PC-3 (cell line): ENCODE measurements at regions of chr12 and their contacts with region 1.

Region 1: GRCh38 chr12:26629864-26630263 is 203.1 kb downstream of the ITPR2 start:
- DNase-seq: peak; percentile 41
- ATAC-seq: peak; percentile 28; the same call in 1 of the 2 replicates
- H3K4me3 ChIP-seq: 0 out of 2 replicates have a peak overlapping the region, but pooled peaks have one; percentile 8
- H3K27ac ChIP-seq: peak overlapping the region; percentile 46
- H3K4me1 ChIP-seq: peaks cover 55% of the 10 kb centered on the region
- H3K27me3 ChIP-seq: no peaks in the 10 kb centered on the region
- CTCF ChIP-seq: peak; percentile 79

Region 2: DNA sequence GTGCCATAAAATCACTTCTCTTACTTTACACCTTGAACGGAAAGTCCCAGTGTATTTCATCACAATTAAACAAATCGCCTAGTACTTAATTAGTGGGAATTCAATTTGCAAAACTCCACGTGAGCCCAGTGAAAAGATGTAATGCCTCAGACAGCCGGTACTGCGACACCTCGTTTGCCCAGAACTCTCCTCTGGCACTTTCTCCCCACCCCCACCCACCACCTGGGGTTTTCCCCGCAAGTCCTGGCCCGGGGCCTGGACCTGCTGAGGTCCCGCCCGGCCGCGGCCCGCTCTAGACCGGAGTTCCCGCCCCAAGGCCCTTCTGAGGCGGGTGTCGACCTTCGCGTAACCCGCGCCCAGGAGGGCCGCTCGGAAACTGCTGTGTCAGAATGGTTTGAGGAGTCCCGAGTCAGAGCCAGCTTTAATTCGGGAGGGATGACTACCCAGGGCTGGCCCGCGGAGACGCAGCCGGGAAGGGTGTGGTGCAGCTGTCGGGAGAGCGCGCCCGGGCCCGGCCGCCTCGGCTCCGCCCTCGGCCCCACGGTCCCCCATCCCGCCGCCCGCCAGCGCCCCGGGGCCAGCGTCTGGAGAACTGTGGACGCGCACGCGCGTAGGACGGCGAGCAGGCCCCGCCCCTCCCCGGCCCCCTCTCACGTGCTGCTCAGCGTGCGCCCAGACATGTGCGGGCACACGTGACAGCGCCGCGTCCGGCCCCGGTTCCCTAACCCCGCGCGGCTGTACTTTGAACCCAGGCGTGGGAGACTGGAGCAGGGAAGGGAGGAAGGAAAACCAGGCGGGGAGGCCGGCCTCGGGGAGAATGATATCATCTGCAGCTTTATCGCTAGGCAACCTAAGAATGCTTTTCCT is 515.8 kb before region 1 on chr12:
- CTCF ChIA-PET with region 1: no interaction called
- POLR2A ChIA-PET with region 1: no interaction called
- intact Hi-C with region 1: loop called (anchors 2 kb)
- DNase-seq: peak; percentile 94
- ATAC-seq: peak; percentile 83
- H3K4me3 ChIP-seq: peak overlapping the region; percentile 71
- H3K27ac ChIP-seq: peak overlapping the region; percentile 89
- H3K4me1 ChIP-seq: peaks cover 48% of the 10 kb centered on the region
- H3K27me3 ChIP-seq: no peaks in the 10 kb centered on the region
- CTCF ChIP-seq: no peak; the same call in 1 of the 2 replicates

Region 3: GRCh38 chr12:26493656-26494055 is 136.2 kb before region 1 on chr12:
- CTCF ChIA-PET with region 1: no interaction called
- POLR2A ChIA-PET with region 1: no interaction called
- intact Hi-C with region 1: no loop called
- DNase-seq: peak; percentile 97
- ATAC-seq: peak; percentile 85
- H3K4me3 ChIP-seq: no peak overlapping the region
- H3K27ac ChIP-seq: no peak overlapping the region
- H3K4me1 ChIP-seq: peaks cover 12% of the 10 kb centered on the region
- H3K27me3 ChIP-seq: no peaks in the 10 kb centered on the region
- CTCF ChIP-seq: no peak

Region 4: GRCh38 chr12:26651566-26652188 is 21.8 kb after region 1 on chr12:
- CTCF ChIA-PET with region 1: interaction called, 14 read pairs
- POLR2A ChIA-PET with region 1: no interaction called
- intact Hi-C with region 1: loop called (anchors 1 kb)
- DNase-seq: peak; percentile 97
- ATAC-seq: peak; percentile 85
- H3K4me3 ChIP-seq: no peak overlapping the region
- H3K27ac ChIP-seq: no peak overlapping the region
- H3K4me1 ChIP-seq: peaks cover 22% of the 10 kb centered on the region
- H3K27me3 ChIP-seq: no peaks in the 10 kb centered on the region
- CTCF ChIP-seq: peak; percentile 99